ENCODE measurements at regions of chr3 and their contacts with region 1.

Region 1: GRCh38 chr3:39146984-39147591 is 6.3 kb downstream of the CSRNP1 start:
- DNase-seq: peak; percentile 83
- ATAC-seq: peak; percentile 57
- H3K4me3 Mint-ChIP-seq: peak overlapping the region; percentile 100
- H3K27ac Mint-ChIP-seq: peak overlapping the region; percentile 99
- H3K4me1 Mint-ChIP-seq: peaks cover 71% of the 10 kb centered on the region
- H3K27me3 Mint-ChIP-seq: no peaks in the 10 kb centered on the region
- CTCF ChIP-seq: no peak

Region 2: DNA sequence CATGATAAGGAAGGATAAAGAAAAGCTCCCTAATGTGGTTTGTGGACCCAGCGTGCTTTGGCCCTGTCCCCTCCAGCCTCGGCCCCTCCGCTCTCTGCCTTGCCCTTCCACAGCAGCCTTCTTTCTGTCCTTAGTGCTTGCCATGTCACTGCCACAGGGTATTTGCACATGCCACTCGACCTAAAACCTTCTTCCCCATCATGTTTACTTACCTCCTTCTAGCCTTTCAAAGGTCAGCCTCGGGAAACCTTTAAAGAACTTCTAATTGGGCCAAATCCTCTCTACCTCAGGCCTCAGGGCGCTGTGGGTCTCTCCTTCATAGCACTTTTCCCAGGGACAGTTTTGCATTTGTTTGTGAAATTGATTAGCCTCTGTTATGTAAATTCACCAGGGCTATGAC is 168.4 kb before region 1 on chr3:
- CTCF ChIA-PET with region 1: no interaction called
- POLR2A ChIA-PET with region 1: no interaction called
- intact Hi-C with region 1: no loop called
- DNase-seq: no peak
- ATAC-seq: no peak
- H3K4me3 Mint-ChIP-seq: no peak overlapping the region
- H3K27ac Mint-ChIP-seq: no peak overlapping the region
- H3K4me1 Mint-ChIP-seq: no peaks in the 10 kb centered on the region
- H3K27me3 Mint-ChIP-seq: peaks cover 1% of the 10 kb centered on the region
- CTCF ChIP-seq: no peak

Region 3: GRCh38 chr3:39107388-39108199 is 39.5 kb before region 1 on chr3 and contains the starts of genes GORASP1 and TTC21A:
- CTCF ChIA-PET with region 1: interaction called, 5 read pairs
- POLR2A ChIA-PET with region 1: interaction called, 5 read pairs
- intact Hi-C with region 1: loop called (anchors 5 kb)
- DNase-seq: peak; percentile 72
- ATAC-seq: peak; percentile 47
- H3K4me3 Mint-ChIP-seq: peak within 1 kb of the TSS; percentile 87
- H3K27ac Mint-ChIP-seq: peak within 1 kb of the TSS; percentile 68
- H3K4me1 Mint-ChIP-seq: peaks cover 35% of the 10 kb centered on the region
- H3K27me3 Mint-ChIP-seq: no peaks in the 10 kb centered on the region
- CTCF ChIP-seq: no peak
- total RNA-seq, gene GORASP1: 16.2 to 18.3 TPM
- total RNA-seq, gene TTC21A: 0.69 to 0.79 TPM

Region 4: GRCh38 chr3:39180546-39181346 is 33.7 kb after region 1 on chr3:
- CTCF ChIA-PET with region 1: interaction called, 5 read pairs
- POLR2A ChIA-PET with region 1: no interaction called
- intact Hi-C with region 1: loop called (anchors 5 kb)
- DNase-seq: peak; percentile 92
- ATAC-seq: peak; percentile 79
- H3K4me3 Mint-ChIP-seq: peak overlapping the region; percentile 69
- H3K27ac Mint-ChIP-seq: peak overlapping the region; percentile 71
- H3K4me1 Mint-ChIP-seq: peaks cover 52% of the 10 kb centered on the region
- H3K27me3 Mint-ChIP-seq: no peaks in the 10 kb centered on the region
- CTCF ChIP-seq: no peak

Measured in activated CD8-positive, alpha-beta T cell treated with anti-CD3 and anti-CD28 coated beads for 36 hours (primary cell).